Activated CD4-positive, alpha-beta memory T cell treated with anti-CD3 and anti-CD28 coated beads for 36 hours (primary cell): ENCODE measurements at regions of chr2 and their contacts with region 1.

Region 1: DNA sequence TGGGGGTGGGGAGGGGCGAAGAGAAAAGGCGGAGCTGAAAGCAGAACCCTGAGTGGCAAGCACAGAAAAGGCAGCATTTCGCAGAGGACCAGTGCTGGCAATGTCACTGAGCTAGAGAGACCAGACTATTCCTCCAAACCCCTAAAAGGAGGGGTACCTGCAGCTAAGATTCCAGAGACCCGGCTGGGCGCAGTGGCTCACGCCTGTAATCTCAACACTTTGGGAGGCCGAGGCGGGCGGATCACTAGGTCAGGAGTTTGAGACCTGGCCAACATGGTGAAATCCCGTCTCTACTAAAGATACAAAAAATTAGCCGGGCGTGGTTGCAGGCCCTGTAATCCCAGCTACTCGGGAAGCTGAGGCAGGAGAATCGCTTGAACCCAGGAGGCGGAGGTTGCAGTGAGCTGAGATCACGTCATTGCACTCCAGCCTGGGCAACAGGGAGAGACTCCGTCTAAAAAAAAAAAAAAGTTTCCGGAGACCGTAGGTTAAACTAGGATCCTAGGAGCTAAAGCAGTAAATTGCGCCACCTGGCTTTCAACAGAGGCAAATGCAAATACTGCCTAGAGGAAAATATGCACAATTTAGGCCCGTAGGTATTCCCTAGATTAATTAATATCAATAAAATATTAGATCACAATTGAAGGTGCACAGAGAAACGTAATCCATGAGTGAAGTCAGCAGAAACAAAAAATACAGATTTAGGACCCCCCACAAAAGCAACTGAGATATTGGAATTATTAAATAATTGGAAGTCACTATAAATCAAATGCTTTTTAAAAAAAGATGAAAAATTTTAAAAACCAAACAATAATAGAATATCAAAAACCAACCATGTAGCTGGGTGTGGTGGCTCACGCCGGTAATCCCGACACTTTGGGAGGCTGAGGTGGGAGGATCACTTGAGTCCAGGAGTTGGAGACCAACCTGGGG is 4.9 kb downstream of the UCN start:
- DNase-seq: peak; percentile 48
- H3K4me3 Mint-ChIP-seq: peak overlapping the region; percentile 55
- H3K27ac Mint-ChIP-seq: no peak overlapping the region
- H3K4me1 Mint-ChIP-seq: peaks cover 8% of the 10 kb centered on the region
- H3K27me3 Mint-ChIP-seq: peaks cover 27% of the 10 kb centered on the region

Region 2: GRCh38 chr2:26959331-26959730 is 344.0 kb before region 1 on chr2:
- CTCF ChIA-PET with region 1: interaction called, 46 read pairs
- POLR2A ChIA-PET with region 1: no interaction called
- intact Hi-C with region 1: loop called (anchors 1 kb)
- DNase-seq: no peak
- H3K4me3 Mint-ChIP-seq: no peak overlapping the region
- H3K27ac Mint-ChIP-seq: no peak overlapping the region
- H3K4me1 Mint-ChIP-seq: no peaks in the 10 kb centered on the region
- H3K27me3 Mint-ChIP-seq: peaks cover 18% of the 10 kb centered on the region

Region 3: GRCh38 chr2:27095745-27096651 is 207.4 kb before region 1 on chr2:
- CTCF ChIA-PET with region 1: interaction called, 5 read pairs
- POLR2A ChIA-PET with region 1: no interaction called
- intact Hi-C with region 1: loop called (anchors 1 kb)
- DNase-seq: peak; percentile 65
- H3K4me3 Mint-ChIP-seq: peak overlapping the region; percentile 31
- H3K27ac Mint-ChIP-seq: no peak overlapping the region
- H3K4me1 Mint-ChIP-seq: peaks cover 9% of the 10 kb centered on the region
- H3K27me3 Mint-ChIP-seq: no peaks in the 10 kb centered on the region

Region 4: DNA sequence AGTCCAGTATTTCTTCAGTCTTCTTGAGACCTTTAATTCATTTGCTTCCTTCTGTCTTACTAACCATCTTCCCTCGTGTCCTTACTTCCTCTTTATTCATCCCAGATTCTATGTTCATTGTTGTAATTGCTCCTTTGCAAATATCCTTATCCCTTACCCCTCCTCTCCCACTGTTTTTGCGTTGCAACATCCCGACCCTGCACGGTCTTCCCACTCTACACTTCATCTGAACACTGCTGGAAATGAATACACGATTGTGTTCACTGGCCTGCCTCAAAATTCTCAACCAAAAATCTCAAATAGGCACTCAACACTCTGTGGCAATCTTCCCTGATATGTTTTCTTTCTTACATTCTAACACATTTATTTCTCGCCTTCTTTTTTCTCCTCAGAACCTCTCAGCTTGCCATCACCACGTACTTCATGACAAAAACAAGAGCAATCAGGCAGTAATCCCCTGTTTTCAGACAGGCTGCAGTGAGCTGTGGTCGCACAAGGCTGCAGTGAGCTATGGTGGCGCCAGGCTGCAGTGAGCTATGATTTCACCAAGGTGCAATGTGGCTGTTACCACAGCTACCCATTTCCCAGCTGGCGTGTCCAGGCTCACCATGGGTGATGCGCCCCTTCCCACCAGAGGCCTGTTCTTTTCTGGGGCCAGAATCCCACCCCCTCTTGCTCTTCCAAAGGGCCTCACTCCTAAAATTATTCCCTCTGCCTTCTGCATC is 128.9 kb before region 1 on chr2:
- CTCF ChIA-PET with region 1: interaction called, 13 read pairs
- POLR2A ChIA-PET with region 1: no interaction called
- intact Hi-C with region 1: no loop called
- DNase-seq: no peak
- H3K4me3 Mint-ChIP-seq: no peak overlapping the region
- H3K27ac Mint-ChIP-seq: no peak overlapping the region
- H3K4me1 Mint-ChIP-seq: peaks cover 2% of the 10 kb centered on the region
- H3K27me3 Mint-ChIP-seq: peaks cover 7% of the 10 kb centered on the region

Region 5: DNA sequence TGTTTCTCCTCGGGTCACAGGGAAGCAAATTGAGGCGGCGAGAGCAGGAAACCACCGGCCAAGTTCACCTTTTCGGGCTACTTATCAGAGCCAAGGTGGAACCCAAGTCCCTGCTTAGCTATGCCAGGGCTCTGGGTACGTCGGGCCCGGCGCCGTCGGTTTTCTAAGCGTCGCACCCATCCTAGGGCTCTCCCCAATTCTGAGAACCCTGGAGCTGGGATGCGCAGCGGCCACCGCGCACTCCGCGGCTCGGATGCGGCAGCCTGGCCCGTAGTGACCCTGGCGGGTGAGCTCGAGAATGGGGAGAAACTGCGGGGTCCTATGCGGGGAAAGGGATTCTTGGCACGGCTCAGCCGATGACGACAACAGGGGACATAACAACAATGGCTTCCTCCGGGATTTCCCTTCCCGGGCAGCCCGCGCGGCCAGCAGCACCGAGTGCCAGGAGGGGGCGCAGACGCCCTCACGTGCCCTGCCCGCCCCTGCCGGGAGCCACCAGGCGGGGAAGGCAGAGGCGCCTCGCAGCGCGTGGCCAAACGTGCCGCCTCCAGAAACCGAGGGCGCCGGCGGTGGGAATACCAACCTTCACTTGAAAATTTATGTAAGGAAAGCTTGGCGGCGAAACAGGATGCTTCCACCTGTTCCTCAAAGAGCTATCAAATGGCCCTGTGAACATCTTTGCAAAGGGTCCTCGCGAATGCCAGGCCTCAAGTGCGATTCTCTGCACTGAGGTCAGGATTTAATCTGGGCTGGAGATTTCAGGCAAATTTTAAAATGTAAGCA is 38.4 kb before region 1 on chr2:
- CTCF ChIA-PET with region 1: interaction called, 15 read pairs
- POLR2A ChIA-PET with region 1: interaction called, 3 read pairs
- intact Hi-C with region 1: no loop called
- DNase-seq: peak; percentile 82
- H3K4me3 Mint-ChIP-seq: peak overlapping the region; percentile 72
- H3K27ac Mint-ChIP-seq: no peak overlapping the region
- H3K4me1 Mint-ChIP-seq: peaks cover 23% of the 10 kb centered on the region
- H3K27me3 Mint-ChIP-seq: peaks cover 42% of the 10 kb centered on the region

Region 6: DNA sequence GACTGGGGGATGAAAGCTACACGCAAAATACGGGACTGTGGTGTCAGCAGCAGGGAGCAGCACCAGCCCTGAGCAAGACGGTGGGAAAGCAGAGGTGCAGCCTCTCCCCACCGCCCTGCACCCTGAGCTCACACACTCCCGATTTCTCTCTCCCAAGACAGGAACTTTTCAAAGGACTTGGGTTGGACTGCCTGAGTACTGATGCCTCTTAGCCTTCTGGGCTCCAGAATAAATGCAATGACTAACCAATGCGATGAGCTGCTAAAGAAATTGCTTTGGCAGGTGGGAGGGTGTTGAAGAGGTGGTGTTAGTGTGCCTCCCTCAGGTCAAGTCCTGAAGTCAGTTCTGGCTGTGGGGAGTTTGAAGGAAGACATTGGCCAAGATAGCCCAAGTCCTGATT is 11.5 kb before region 1 on chr2:
- CTCF ChIA-PET with region 1: interaction called, 18 read pairs
- POLR2A ChIA-PET with region 1: no interaction called
- intact Hi-C with region 1: no loop called
- DNase-seq: no peak
- H3K4me3 Mint-ChIP-seq: no peak overlapping the region
- H3K27ac Mint-ChIP-seq: no peak overlapping the region
- H3K4me1 Mint-ChIP-seq: no peaks in the 10 kb centered on the region
- H3K27me3 Mint-ChIP-seq: peaks cover 11% of the 10 kb centered on the region

Region 7: GRCh38 chr2:27390822-27391679 is 87.7 kb after region 1 on chr2:
- CTCF ChIA-PET with region 1: no interaction called
- POLR2A ChIA-PET with region 1: no interaction called
- intact Hi-C with region 1: no loop called
- DNase-seq: no peak
- H3K4me3 Mint-ChIP-seq: peak overlapping the region; percentile 3
- H3K27ac Mint-ChIP-seq: peak overlapping the region; percentile 67
- H3K4me1 Mint-ChIP-seq: peaks cover 25% of the 10 kb centered on the region
- H3K27me3 Mint-ChIP-seq: no peaks in the 10 kb centered on the region